BJ (cell line): ENCODE measurements at regions of chr9 and their contacts with region 1.

Region 1: GRCh38 chr9:16133556-16134227 is 580.8 kb downstream of the CCDC171 start:
- DNase-seq: no peak
- H3K4me3 ChIP-seq: no peak overlapping the region
- H3K27me3 ChIP-seq: no peaks in the 10 kb centered on the region
- CTCF ChIP-seq: peak; percentile 65

Region 2: DNA sequence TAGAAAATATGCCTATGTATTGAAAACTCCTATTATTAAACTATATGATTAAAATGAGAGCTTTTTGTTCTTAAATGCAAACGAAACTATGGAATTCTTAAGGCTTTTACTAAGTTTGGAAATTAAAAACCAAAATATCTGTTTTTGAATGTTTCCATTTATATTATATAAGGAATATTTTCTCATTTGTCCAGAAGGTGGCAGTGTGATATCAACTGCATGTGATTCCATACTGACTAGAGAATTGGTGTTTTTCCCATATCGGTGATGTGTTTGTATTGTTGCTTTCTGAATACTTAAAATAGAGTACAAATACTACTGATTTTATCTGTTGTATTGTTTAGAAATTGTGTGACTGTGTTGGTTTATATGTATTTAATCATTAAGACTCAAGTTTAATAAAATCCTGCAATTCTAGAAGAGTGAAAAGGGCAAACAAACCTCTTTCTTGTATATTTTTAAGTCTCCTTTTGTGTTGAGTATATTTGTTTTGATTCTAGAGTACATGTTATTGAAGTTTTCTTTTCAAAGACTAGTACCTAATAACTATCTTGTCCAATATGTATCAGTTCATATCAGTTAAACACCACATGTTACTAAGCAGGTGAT is 260.0 kb before region 1 on chr9:
- CTCF ChIA-PET with region 1: interaction called, 10 read pairs
- POLR2A ChIA-PET with region 1: no interaction called
- DNase-seq: no peak
- H3K4me3 ChIP-seq: no peak overlapping the region
- H3K27me3 ChIP-seq: no peaks in the 10 kb centered on the region
- CTCF ChIP-seq: peak; percentile 52

Region 3: DNA sequence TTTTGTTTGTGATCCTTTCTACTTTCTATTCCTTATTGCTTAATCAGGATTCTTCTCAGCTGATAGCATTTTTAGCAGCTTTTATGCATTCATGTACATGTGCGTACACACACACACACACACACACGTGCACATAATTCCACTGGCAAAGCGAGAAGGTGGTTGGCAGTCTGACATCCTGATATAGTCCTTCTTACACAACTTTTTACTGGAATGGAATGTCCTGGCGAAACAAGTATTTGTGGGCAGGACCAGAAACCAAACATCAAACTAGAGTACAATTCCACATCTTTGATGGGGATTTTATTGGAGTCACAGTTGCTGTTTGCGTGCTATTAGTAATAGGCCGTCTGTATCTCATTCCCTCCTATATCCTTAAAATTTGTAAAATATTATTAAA is 224.4 kb before region 1 on chr9:
- CTCF ChIA-PET with region 1: no interaction called
- POLR2A ChIA-PET with region 1: no interaction called
- DNase-seq: peak; percentile 56
- H3K4me3 ChIP-seq: no peak overlapping the region
- H3K27me3 ChIP-seq: no peaks in the 10 kb centered on the region
- CTCF ChIP-seq: no peak

Region 4: DNA sequence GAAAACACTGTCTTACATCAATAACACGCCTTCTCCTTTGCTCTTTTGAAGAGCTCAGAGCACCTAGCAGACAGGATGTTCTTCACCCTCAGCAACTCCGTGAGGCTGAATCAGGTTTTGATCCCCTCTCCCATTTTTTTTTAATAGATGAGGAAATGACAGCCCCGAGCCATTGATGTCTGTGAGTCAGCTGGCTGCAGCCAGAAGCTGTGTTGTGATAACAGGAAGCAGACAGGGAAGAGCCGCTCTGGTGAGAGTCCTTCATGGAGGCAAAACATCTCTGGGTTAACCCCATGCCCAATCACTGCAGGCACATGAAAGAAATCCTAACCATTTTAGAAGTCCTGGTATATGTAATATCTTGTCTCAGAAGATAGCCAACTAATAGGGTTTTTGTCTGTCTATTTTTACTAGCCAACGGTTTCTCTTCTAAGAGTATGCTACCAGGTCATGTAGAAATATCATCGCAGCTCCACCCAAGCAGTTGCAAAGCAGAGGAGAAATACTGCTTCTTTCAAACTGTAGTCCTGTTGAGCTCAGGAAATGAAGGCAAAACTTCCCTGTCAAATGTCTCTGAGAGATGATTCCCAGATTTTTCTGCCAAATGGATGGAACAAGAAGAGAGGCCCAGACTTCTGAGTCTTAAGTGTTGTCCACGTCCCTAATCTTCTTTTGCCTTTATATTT is 11.9 kb before region 1 on chr9:
- CTCF ChIA-PET with region 1: interaction called, 26 read pairs
- POLR2A ChIA-PET with region 1: no interaction called
- DNase-seq: no peak
- H3K4me3 ChIP-seq: no peak overlapping the region
- H3K27me3 ChIP-seq: no peaks in the 10 kb centered on the region
- CTCF ChIP-seq: no peak

Region 5: DNA sequence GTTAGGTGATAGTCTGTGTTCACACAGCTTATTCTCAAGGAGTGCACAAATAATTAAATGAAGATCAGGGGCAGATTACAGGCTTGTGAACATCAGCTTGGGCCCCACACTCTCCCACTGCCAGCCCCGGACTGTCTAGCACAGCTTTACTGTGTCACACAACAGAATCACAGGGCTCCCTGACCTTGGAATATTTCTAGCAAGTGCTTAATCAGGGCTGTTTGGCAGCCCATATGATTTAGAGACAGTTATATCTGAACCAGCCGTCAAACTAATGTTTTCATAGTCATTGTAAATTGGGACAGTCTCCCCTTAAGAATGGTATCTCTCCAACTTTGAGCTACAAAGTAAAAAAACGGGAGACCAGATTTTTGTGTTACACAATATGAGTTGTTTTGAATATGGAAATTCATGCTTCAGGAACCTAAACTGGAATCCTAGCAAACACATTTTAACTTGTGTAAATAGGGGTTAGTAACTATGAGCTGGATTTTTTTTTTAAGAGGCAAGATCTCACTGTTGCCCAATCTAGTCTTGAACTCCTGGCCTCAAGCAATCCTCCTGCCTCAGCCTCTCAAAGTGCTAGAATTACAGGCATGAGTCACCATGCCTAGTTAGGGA is 219.2 kb after region 1 on chr9:
- CTCF ChIA-PET with region 1: no interaction called
- POLR2A ChIA-PET with region 1: no interaction called
- DNase-seq: no peak
- H3K4me3 ChIP-seq: no peak overlapping the region
- H3K27me3 ChIP-seq: no peaks in the 10 kb centered on the region
- CTCF ChIP-seq: no peak